ENCODE measurements at regions of chr12 and their contacts with region 1.

Region 1: DNA sequence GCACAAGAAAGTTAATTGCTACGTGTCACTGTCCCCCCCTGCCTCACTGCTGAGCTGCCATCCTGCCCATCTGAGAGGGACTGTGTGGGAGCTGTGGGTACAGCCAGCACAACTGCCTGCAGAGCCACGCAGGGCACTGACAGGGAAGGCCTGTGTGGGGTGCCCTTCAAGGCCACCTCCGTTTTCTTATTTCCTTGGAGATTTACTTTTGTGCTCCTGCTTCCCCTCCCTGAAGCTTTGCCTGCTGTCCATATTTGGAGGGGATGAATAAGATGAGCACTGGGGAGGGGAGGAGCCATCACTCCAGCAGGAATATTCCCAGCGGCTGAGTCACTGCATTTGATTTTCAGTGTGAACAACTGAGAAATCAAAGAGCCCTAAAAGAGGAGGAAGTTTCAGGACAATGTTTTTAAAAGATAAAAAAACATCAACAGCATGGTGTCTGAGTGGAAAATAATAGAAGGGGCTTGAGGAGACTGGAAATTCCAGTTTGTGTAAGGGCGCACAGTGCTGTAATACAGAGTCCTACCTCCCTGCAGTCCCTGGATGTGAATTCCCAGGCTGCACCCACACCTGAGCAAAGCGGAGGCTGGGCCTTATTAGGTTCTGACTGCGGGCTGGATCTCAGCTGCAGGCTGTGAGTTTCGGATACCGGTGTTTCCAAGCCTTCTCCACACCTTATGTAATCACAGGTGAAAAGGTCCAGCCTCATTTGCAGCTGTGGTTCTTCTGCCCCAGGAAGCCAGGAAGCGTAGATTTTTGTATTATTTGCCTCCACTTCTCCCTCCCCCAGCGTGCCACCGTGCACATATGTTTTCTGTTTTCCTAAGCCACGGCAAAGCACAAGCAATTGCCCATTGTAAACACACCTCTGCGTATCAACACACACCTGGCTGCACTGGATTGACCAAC is 192.6 kb upstream of the BCL2L14 start:
- DNase-seq: no peak
- ATAC-seq: peak; percentile 53 to 74 (median 62)
- H3K4me3 ChIP-seq: no peak overlapping the region
- H3K27ac ChIP-seq: no peak overlapping the region
- H3K4me1 ChIP-seq: peaks cover 19% of the 10 kb centered on the region
- H3K27me3 ChIP-seq: no peaks in the 10 kb centered on the region
- CTCF ChIP-seq: no peak

Region 2: DNA sequence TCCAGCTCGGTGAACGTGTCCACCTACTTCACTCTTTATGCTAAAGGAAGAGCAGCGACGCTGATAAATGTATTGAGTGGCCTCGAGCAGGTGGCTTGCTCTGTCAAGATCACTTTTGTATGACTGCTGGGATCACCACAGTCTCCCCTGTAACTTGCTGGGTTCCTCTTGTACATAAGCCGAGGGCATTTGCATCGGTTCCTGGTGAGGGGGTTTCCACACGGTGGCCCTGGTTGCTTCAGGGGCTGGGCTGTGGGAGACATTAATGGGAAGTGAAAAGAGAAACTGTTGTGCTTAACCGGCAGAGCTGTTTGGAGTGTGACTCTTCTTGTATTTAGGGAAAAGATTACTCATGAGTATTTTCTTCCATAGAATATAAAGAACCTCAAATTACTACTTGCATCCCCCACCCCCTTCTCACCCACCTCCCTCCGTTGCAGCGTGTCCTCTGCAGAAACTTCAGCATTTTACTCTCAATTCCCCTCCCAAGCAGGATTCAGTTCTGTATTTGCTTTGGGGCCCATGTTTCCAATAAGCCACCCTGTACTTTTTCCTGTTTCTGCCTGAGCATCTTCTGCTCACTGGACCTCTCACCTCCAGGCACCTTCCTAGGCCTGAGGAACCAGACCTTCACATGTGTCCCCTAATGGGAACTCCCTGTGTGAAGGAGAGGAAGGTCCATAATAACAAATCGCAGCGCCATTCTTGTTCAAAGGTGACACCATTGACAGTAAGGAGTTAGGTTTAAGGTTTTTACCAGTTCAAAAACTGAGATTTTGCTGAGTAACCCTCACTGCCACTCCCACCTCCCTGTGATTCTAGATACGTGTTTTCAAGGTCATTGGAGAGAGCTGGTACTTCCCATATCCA is 41.6 kb before region 1 on chr12:
- intact Hi-C with region 1: loop called in 1 of 2 experiments (anchors 5 kb)
- DNase-seq: no peak
- ATAC-seq: no peak
- H3K4me3 ChIP-seq: no peak overlapping the region
- H3K27ac ChIP-seq: no peak overlapping the region
- H3K4me1 ChIP-seq: peaks cover 11% of the 10 kb centered on the region
- H3K27me3 ChIP-seq: no peaks in the 10 kb centered on the region
- CTCF ChIP-seq: no peak

Region 3: GRCh38 chr12:12032851-12033588 is 154.9 kb after region 1 on chr12:
- intact Hi-C with region 1: no loop called
- DNase-seq: peak; percentile 62 to 85
- ATAC-seq: peak; percentile 81 to 89 (median 84)
- H3K4me3 ChIP-seq: peak overlapping the region; percentile 60
- H3K27ac ChIP-seq: no peak overlapping the region
- H3K4me1 ChIP-seq: no peaks in the 10 kb centered on the region
- H3K27me3 ChIP-seq: no peaks in the 10 kb centered on the region
- CTCF ChIP-seq: peak; percentile 91

Region 4: DNA sequence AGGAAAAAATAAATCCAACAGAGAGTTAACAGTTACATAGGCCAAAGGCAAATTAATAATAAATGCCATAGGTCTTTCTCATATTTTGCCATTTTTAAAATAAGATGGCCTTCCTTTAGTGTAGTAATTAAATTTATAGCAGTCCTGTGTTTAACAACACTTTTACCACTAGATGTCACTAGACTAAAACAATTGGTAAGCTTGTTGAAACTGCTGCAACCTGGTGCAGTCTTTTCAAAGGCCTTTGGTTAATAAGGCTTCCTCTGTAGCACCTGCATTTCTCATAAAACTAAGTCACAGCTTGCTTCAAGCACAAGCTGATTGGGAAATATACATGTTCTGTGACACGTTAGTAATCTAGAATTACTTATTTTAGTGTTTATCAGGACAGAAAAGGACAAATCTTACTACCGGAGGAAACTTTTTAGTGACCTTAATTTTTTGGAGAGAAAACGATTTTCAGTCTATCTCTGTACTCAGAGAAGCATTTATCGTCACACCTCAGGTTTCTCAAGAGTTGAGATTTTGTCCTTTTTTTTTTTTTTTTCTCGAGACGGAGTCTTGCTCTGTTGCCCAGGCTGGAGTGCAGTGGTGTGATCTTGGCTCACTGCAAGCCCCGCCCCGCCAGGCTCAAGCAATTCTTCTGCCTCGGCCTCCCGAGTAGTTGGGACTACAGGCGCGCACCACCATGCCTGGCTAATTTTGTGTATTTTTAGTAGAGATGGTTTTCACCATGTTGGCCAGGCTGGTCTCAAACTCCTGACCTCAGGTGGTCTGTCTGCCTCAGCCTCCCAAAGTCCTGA is 498.7 kb after region 1 on chr12:
- intact Hi-C with region 1: no loop called
- DNase-seq: no peak
- ATAC-seq: peak; percentile 76 to 92 (median 82)
- H3K4me3 ChIP-seq: no peak overlapping the region
- H3K27ac ChIP-seq: no peak overlapping the region
- H3K4me1 ChIP-seq: peaks cover 5% of the 10 kb centered on the region
- H3K27me3 ChIP-seq: no peaks in the 10 kb centered on the region
- CTCF ChIP-seq: peak; percentile 79